MCF 10A (cell line): ENCODE measurements at regions of chr20 and their contacts with region 1.

Region 1: GRCh38 chr20:17968366-17969279 is at the starts of genes MGME1 and SNX5:
- DNase-seq: peak; percentile 99
- H3K4me3 Mint-ChIP-seq: peak within 1 kb of the TSS; percentile 95
- H3K27ac Mint-ChIP-seq: peak within 1 kb of the TSS; percentile 98
- H3K4me1 Mint-ChIP-seq: peaks cover 39% of the 10 kb centered on the region
- H3K27me3 Mint-ChIP-seq: no peaks in the 10 kb centered on the region
- CTCF ChIP-seq: no peak
- total RNA-seq, gene MGME1: 18.0 and 24.0 TPM in 2 replicates
- total RNA-seq, gene SNX5: 108 and 170 TPM in 2 replicates

Region 2: GRCh38 chr20:17682103-17682888 is 286.3 kb before region 1 on chr20 and contains the start of gene RRBP1:
- CTCF ChIA-PET with region 1: interaction called, 6 read pairs
- POLR2A ChIA-PET with region 1: interaction called, 72 read pairs
- intact Hi-C with region 1: no loop called
- DNase-seq: peak; percentile 97
- H3K4me3 Mint-ChIP-seq: peak within 1 kb of the TSS; percentile 81
- H3K27ac Mint-ChIP-seq: peak within 1 kb of the TSS; percentile 61
- H3K4me1 Mint-ChIP-seq: peaks cover 11% of the 10 kb centered on the region
- H3K27me3 Mint-ChIP-seq: peaks cover 41% of the 10 kb centered on the region
- CTCF ChIP-seq: peak; percentile 65
- total RNA-seq, gene RRBP1: 203 and 244 TPM in 2 replicates

Region 3: DNA sequence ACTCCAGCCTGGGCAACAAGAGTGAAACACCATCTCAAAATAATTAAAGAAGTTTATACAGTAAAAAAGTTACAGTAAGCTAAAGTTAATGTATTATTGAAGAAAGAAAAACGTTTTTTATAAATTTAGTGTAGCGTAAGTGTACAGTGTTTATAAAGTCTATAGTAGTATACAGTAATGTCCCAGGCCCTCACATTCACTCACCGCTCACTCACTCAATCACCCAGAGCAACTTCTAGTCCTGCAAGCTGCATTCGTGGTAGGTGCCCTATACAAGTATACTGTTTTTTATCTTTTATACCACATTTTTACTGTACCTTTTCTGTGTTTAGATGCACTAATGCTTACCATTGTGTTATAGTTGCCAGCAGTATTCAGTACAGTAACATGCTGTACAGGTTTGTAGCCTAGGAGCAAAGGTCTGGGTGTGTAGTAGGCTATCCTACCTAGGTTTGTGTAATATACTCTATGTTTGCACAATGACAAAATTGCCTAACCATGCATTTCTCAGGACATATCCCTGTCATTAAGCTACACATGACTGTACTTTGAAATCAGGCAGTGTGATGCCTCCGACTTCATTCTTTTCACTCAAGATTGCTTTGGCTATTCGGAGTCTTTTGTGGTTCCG is 16.9 kb after region 1 on chr20:
- CTCF ChIA-PET with region 1: interaction called, 9 read pairs
- POLR2A ChIA-PET with region 1: interaction called, 100 read pairs
- intact Hi-C with region 1: no loop called
- DNase-seq: no peak
- H3K4me3 Mint-ChIP-seq: no peak overlapping the region
- H3K27ac Mint-ChIP-seq: no peak overlapping the region
- H3K4me1 Mint-ChIP-seq: no peaks in the 10 kb centered on the region
- H3K27me3 Mint-ChIP-seq: no peaks in the 10 kb centered on the region
- CTCF ChIP-seq: no peak

Region 4: GRCh38 chr20:18137412-18138265 is 169.0 kb after region 1 on chr20 and contains the starts of genes KAT14 and PET117:
- CTCF ChIA-PET with region 1: interaction called, 6 read pairs
- POLR2A ChIA-PET with region 1: interaction called, 12 read pairs
- intact Hi-C with region 1: no loop called
- DNase-seq: peak; percentile 87
- H3K4me3 Mint-ChIP-seq: peak within 1 kb of the TSS; percentile 81
- H3K27ac Mint-ChIP-seq: peak within 1 kb of the TSS; percentile 21
- H3K4me1 Mint-ChIP-seq: peaks cover 24% of the 10 kb centered on the region
- H3K27me3 Mint-ChIP-seq: no peaks in the 10 kb centered on the region
- CTCF ChIP-seq: no peak
- total RNA-seq, gene KAT14: 15.5 and 16.4 TPM in 2 replicates
- total RNA-seq, gene PET117: 11.9 and 14.8 TPM in 2 replicates

Region 5: DNA sequence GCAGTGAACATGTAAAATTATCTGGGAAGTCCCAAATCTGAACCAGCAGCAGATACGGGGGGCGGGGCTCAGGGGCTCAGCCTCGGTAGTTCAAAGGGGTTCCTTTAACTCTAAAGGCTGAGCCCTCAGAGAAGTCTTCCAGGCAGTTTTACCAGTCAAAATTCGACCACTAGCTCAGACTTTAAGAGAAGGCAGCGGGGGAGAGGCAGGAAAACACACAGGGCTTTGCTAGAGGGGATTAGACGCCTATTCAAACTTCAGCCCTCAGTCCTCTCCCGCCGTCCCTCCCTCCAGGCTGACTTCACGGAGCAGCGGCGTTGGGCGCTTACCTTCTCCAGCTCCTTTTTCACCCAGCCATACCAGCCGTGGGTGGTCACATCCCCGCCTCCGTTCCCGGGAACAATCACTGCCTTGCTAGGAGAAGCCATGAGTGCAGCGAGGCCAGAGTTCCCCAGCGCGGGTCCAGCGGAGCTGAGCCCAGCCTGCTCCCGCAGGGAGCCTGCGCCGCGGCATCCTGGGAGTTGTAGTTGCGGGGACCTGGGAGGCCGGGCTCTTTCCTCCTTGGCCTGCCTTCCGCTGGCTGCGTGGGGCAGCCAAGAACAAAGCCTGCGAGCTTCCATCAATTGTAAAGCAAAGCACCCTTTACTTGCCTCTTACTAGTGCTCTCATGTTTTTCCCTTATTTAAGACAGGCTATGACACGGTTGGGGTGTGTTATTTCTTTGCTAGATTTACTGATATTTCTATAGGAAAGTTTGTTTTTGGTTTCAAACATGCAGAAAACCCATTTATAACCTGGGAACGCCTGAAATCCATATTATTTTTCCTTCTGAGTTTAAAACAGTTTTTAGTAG is 528.3 kb after region 1 on chr20 and contains the start of gene RBBP9:
- CTCF ChIA-PET with region 1: no interaction called
- POLR2A ChIA-PET with region 1: interaction called, 10 read pairs
- intact Hi-C with region 1: no loop called
- DNase-seq: peak; percentile 83
- H3K4me3 Mint-ChIP-seq: peak within 1 kb of the TSS; percentile 91
- H3K27ac Mint-ChIP-seq: peak within 1 kb of the TSS; percentile 87
- H3K4me1 Mint-ChIP-seq: no peaks in the 10 kb centered on the region
- H3K27me3 Mint-ChIP-seq: no peaks in the 10 kb centered on the region
- CTCF ChIP-seq: no peak
- total RNA-seq, gene RBBP9: 6.8 and 7.3 TPM in 2 replicates